ENCODE measurements at regions of chr3 and their contacts with region 1.

Region 1: DNA sequence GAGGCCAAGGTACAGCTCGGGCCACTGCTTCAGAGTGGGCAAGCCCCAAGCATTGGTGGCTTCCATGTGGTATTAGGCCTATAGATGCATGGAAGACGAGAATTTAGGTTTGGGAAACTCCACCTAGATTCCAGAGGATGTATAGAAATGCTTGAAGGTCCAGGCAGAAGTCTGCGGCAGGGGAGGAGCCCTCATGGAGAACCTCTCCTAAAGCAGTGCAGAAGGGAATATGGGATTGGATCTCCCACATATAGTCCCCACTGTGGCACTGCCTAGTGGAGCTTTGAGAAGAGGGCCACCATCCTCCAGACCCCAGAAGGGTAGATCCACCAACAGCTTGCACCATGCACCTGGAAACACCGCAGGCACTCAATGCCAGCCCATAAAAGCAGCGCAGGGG is 48.1 kb upstream of the XXYLT1 start:
- DNase-seq: no peak
- ATAC-seq: no peak
- H3K4me3 ChIP-seq: no peak overlapping the region
- H3K4me3 Mint-ChIP-seq: no peak overlapping the region
- H3K27ac ChIP-seq: no peak overlapping the region
- H3K27ac Mint-ChIP-seq: no peak overlapping the region
- H3K4me1 ChIP-seq: no peaks in the 10 kb centered on the region
- H3K4me1 Mint-ChIP-seq: no peaks in the 10 kb centered on the region
- H3K27me3 ChIP-seq: no peaks in the 10 kb centered on the region
- H3K27me3 Mint-ChIP-seq: no peaks in the 10 kb centered on the region
- CTCF ChIP-seq: no peak

Region 2: GRCh38 chr3:195035345-195036190 is 283.5 kb before region 1 on chr3:
- CTCF ChIA-PET with region 1: no interaction called
- POLR2A ChIA-PET with region 1: no interaction called
- intact Hi-C with region 1: no loop called
- DNase-seq: no peak
- ATAC-seq: no peak
- H3K4me3 ChIP-seq: no peak overlapping the region
- H3K4me3 Mint-ChIP-seq: no peak overlapping the region
- H3K27ac ChIP-seq: no peak overlapping the region
- H3K27ac Mint-ChIP-seq: no peak overlapping the region
- H3K4me1 ChIP-seq: peaks cover 5 to 24% of the 10 kb centered on the region in 2 donors
- H3K4me1 Mint-ChIP-seq: peaks cover 15% of the 10 kb centered on the region
- H3K27me3 ChIP-seq: no peaks in the 10 kb centered on the region
- H3K27me3 Mint-ChIP-seq: no peaks in the 10 kb centered on the region
- CTCF ChIP-seq: no peak

Region 3: GRCh38 chr3:195154793-195155535 is 164.1 kb before region 1 on chr3:
- CTCF ChIA-PET with region 1: no interaction called
- POLR2A ChIA-PET with region 1: no interaction called
- intact Hi-C with region 1: no loop called
- DNase-seq: peak; percentile 66
- ATAC-seq: peak; percentile 45
- H3K4me3 ChIP-seq: peak overlapping the region in 1 of 5 experiments; percentile 35
- H3K4me3 Mint-ChIP-seq: peak overlapping the region; percentile 78
- H3K27ac ChIP-seq: peak overlapping the region; percentile 31 to 55
- H3K27ac Mint-ChIP-seq: peak overlapping the region; percentile 94
- H3K4me1 ChIP-seq: peaks cover 66 to 83% of the 10 kb centered on the region in 2 donors
- H3K4me1 Mint-ChIP-seq: peaks cover 91% of the 10 kb centered on the region
- H3K27me3 ChIP-seq: no peaks in the 10 kb centered on the region
- H3K27me3 Mint-ChIP-seq: no peaks in the 10 kb centered on the region
- CTCF ChIP-seq: no peak

Region 4: GRCh38 chr3:195259475-195260279 is 59.4 kb before region 1 on chr3:
- CTCF ChIA-PET with region 1: no interaction called
- POLR2A ChIA-PET with region 1: no interaction called
- intact Hi-C with region 1: no loop called
- DNase-seq: peak; percentile 95
- ATAC-seq: peak; percentile 90
- H3K4me3 ChIP-seq: peak overlapping the region in 4 of 5 experiments; percentile 63 to 89 (median 72)
- H3K4me3 Mint-ChIP-seq: peak overlapping the region; percentile 74
- H3K27ac ChIP-seq: peak overlapping the region; percentile 78 to 87
- H3K27ac Mint-ChIP-seq: peak overlapping the region; percentile 92
- H3K4me1 ChIP-seq: peaks cover 16 to 23% of the 10 kb centered on the region in 2 donors
- H3K4me1 Mint-ChIP-seq: peaks cover 19% of the 10 kb centered on the region
- H3K27me3 ChIP-seq: no peaks in the 10 kb centered on the region
- H3K27me3 Mint-ChIP-seq: no peaks in the 10 kb centered on the region
- CTCF ChIP-seq: peak; percentile 73

Region 5: GRCh38 chr3:195286115-195286872 is 32.8 kb before region 1 on chr3:
- CTCF ChIA-PET with region 1: no interaction called
- POLR2A ChIA-PET with region 1: no interaction called
- intact Hi-C with region 1: loop called (anchors 5 kb)
- DNase-seq: no peak
- ATAC-seq: no peak
- H3K4me3 ChIP-seq: no peak overlapping the region
- H3K4me3 Mint-ChIP-seq: no peak overlapping the region
- H3K27ac ChIP-seq: no peak overlapping the region
- H3K27ac Mint-ChIP-seq: no peak overlapping the region
- H3K4me1 ChIP-seq: no peaks in the 10 kb centered on the region
- H3K4me1 Mint-ChIP-seq: no peaks in the 10 kb centered on the region
- H3K27me3 ChIP-seq: no peaks in the 10 kb centered on the region
- H3K27me3 Mint-ChIP-seq: no peaks in the 10 kb centered on the region
- CTCF ChIP-seq: no peak

Region 6: DNA sequence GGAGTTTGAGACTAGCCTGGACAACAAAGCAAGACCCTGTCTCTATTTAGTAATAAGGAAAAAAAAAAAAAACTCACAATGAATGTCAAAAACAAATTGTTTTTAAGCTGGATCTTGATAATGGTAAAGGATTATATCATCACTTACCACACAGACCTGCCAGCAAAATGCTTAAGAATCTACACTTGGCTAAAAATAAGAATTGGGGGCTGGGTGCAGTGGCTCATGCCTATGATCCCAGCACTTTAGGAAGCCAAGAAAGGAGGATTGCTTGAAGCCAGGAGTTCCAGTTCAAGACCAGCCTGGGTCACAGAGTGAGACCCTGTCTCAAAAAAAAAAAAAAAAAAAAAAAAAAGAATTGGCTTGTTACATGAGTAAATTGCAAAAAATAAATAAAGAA is 92.8 kb after region 1 on chr3:
- CTCF ChIA-PET with region 1: no interaction called
- POLR2A ChIA-PET with region 1: no interaction called
- intact Hi-C with region 1: no loop called
- DNase-seq: no peak
- ATAC-seq: no peak
- H3K4me3 ChIP-seq: no peak overlapping the region
- H3K4me3 Mint-ChIP-seq: no peak overlapping the region
- H3K27ac ChIP-seq: peak overlapping the region in 1 of 2 donors; percentile 38
- H3K27ac Mint-ChIP-seq: no peak overlapping the region
- H3K4me1 ChIP-seq: peaks cover 0 to 25% of the 10 kb centered on the region in 2 donors
- H3K4me1 Mint-ChIP-seq: peaks cover 62% of the 10 kb centered on the region
- H3K27me3 ChIP-seq: no peaks in the 10 kb centered on the region
- H3K27me3 Mint-ChIP-seq: no peaks in the 10 kb centered on the region
- CTCF ChIP-seq: no peak